BJ (cell line): ENCODE measurements at regions of chr4 and their contacts with region 1.

Region 1: GRCh38 chr4:99062120-99062519 is 26.5 kb downstream of the ADH5 start:
- DNase-seq: no peak
- H3K4me3 ChIP-seq: no peak overlapping the region
- H3K27me3 ChIP-seq: no peaks in the 10 kb centered on the region
- CTCF ChIP-seq: no peak

Region 2: DNA sequence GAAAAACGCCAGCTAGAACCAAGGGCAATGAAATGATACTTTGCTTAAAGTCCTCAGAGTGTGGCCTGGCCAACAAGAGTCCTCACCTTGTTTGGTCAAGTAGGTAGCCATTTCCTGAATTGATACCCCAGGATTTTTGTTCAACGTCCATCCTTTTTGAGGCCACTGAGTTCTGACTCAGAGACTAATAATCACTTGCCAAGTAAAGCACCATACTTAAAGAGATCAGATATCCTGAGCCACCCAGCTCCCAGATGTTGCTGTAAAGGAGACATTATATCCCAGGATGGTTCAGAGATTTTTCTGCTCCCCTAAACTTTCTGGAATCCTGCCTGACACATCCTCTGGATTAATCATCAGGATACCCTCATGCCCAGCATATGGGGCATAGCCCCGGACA is 610.0 kb before region 1 on chr4:
- CTCF ChIA-PET with region 1: no interaction called
- POLR2A ChIA-PET with region 1: interaction called, 18 read pairs
- DNase-seq: no peak
- H3K4me3 ChIP-seq: no peak overlapping the region
- H3K27me3 ChIP-seq: no peaks in the 10 kb centered on the region
- CTCF ChIP-seq: no peak